B cell (primary cell): ENCODE measurements at regions of chr15 and their contacts with region 1.

Region 1: GRCh38 chr15:56537881-56538280 is 72.9 kb upstream of the MNS1 start:
- DNase-seq: peak; percentile 25
- ATAC-seq: peak; percentile 34
- H3K4me3 ChIP-seq: no peak overlapping the region
- H3K4me3 Mint-ChIP-seq: no peak overlapping the region
- H3K27ac ChIP-seq: no peak overlapping the region
- H3K27ac Mint-ChIP-seq: no peak overlapping the region
- H3K4me1 ChIP-seq: peaks cover 11 to 18% of the 10 kb centered on the region in 2 donors
- H3K4me1 Mint-ChIP-seq: peaks cover 37% of the 10 kb centered on the region
- H3K27me3 ChIP-seq: no peaks in the 10 kb centered on the region
- H3K27me3 Mint-ChIP-seq: no peaks in the 10 kb centered on the region
- CTCF ChIP-seq: no peak

Region 2: GRCh38 chr15:56428821-56429458 is 108.9 kb before region 1 on chr15:
- CTCF ChIA-PET with region 1: no interaction called
- POLR2A ChIA-PET with region 1: no interaction called
- intact Hi-C with region 1: no loop called
- DNase-seq: peak; percentile 49
- ATAC-seq: no peak
- H3K4me3 ChIP-seq: no peak overlapping the region
- H3K4me3 Mint-ChIP-seq: no peak overlapping the region
- H3K27ac ChIP-seq: no peak overlapping the region
- H3K27ac Mint-ChIP-seq: no peak overlapping the region
- H3K4me1 ChIP-seq: no peaks in the 10 kb centered on the region
- H3K4me1 Mint-ChIP-seq: no peaks in the 10 kb centered on the region
- H3K27me3 ChIP-seq: no peaks in the 10 kb centered on the region
- H3K27me3 Mint-ChIP-seq: no peaks in the 10 kb centered on the region
- CTCF ChIP-seq: peak; percentile 73

Region 3: GRCh38 chr15:56568466-56569167 is 30.7 kb after region 1 on chr15:
- CTCF ChIA-PET with region 1: no interaction called
- POLR2A ChIA-PET with region 1: no interaction called
- intact Hi-C with region 1: no loop called
- DNase-seq: no peak
- ATAC-seq: no peak
- H3K4me3 ChIP-seq: no peak overlapping the region
- H3K4me3 Mint-ChIP-seq: no peak overlapping the region
- H3K27ac ChIP-seq: no peak overlapping the region
- H3K27ac Mint-ChIP-seq: no peak overlapping the region
- H3K4me1 ChIP-seq: no peaks in the 10 kb centered on the region
- H3K4me1 Mint-ChIP-seq: no peaks in the 10 kb centered on the region
- H3K27me3 ChIP-seq: no peaks in the 10 kb centered on the region
- H3K27me3 Mint-ChIP-seq: peaks cover 5% of the 10 kb centered on the region
- CTCF ChIP-seq: no peak

Region 4: GRCh38 chr15:56608140-56608778 is 70.4 kb after region 1 on chr15:
- CTCF ChIA-PET with region 1: no interaction called
- POLR2A ChIA-PET with region 1: interaction called, 3 read pairs
- intact Hi-C with region 1: loop called (anchors 5 kb)
- DNase-seq: peak; percentile 57
- ATAC-seq: peak; percentile 72
- H3K4me3 ChIP-seq: peak overlapping the region in 1 of 5 experiments; percentile 26
- H3K4me3 Mint-ChIP-seq: peak overlapping the region; percentile 23
- H3K27ac ChIP-seq: peak overlapping the region in 1 of 2 donors; percentile 55
- H3K27ac Mint-ChIP-seq: peak overlapping the region; percentile 5
- H3K4me1 ChIP-seq: peaks cover 20 to 33% of the 10 kb centered on the region in 2 donors
- H3K4me1 Mint-ChIP-seq: peaks cover 36% of the 10 kb centered on the region
- H3K27me3 ChIP-seq: no peaks in the 10 kb centered on the region
- H3K27me3 Mint-ChIP-seq: no peaks in the 10 kb centered on the region
- CTCF ChIP-seq: no peak